Activated T-helper 1 cell treated with anti-CD3 and anti-CD28 coated beads, Interleukin-12 subunit alpha, Interleukin-12 subunit beta, Interleukin-2, Interleukin-4 antibody, amounts not matched to agents 30 ng/mL and 10 ng/mL and 1 ng/mL, durations not matched to agents 14 hours and 24 hours and 36 hours (primary cell): ENCODE measurements at regions of chr11 and their contacts with region 1.

Region 1: DNA sequence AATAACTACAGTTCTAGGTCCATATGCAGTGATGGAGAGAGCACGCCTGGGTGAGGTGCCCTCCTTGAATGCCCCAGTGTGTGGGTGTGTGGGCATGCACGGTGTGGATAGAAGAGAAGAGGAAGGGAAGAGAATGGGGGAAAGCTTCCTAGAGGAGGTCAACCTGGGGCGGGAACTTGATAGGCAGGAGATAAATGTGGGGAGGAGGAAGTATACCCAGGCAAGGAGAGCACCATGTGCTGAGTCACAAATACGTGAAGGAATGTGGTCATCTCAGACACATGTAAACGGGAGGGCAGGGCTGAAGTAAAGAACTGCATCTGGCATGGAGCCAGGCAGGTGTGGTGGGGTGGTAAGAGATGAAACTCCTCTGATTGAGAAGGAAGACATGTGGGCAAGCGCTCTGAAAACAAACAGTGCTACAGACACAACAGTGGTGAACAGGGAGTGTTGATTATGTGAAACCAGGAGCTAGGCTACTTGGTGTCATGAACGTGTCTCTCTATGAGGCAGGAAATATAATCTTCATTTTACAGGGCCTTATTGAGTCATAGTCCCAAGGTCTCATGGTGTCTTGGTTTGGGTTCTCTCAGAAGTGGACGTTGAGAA is 61.5 kb upstream of the EED start:
- DNase-seq: peak; percentile 30
- H3K4me3 Mint-ChIP-seq: no peak overlapping the region
- H3K27ac Mint-ChIP-seq: no peak overlapping the region
- H3K4me1 Mint-ChIP-seq: peaks cover 9% of the 10 kb centered on the region
- H3K27me3 Mint-ChIP-seq: no peaks in the 10 kb centered on the region

Region 2: DNA sequence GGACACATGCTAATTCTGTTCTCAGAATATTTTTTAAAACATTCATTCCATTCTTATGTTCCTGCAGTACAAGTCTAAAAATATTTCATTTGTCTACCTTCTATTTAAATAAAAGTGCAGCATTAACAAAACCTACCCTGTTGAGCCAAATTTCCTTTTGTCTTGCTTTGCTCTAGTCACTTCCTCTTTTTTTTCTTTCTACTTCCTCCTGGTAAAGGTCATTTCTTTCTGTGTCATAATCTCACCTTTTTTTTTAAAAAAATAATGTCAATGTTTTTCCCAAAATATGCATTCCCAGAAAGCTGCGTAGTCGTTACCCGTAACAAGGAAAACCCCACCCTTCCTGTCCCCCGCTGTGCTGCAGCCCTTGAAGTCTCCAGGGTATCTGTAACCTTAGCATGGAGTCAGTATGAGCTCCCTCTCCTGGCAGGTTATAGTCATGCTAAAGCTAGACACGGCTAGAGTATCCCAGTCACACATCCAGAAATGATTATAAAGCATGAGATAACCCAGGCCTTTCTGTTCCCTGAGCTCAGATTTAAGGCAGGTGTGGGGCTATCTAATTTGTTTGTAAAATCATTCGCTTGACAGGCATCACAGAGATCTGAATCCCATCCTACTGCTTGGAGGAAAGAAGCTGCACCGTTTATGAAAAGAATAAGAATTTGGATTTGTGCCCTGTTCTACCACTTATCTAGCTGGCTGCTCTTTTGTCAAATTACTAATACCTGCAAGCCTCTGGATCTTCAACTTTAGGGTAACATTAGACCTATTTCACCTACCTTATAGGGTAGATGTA is 10.4 kb after region 1 on chr11:
- intact Hi-C with region 1: loop called (anchors 1 kb)
- DNase-seq: peak; percentile 58
- H3K4me3 Mint-ChIP-seq: peak overlapping the region; percentile 58
- H3K27ac Mint-ChIP-seq: peak overlapping the region; percentile 54
- H3K4me1 Mint-ChIP-seq: peaks cover 43% of the 10 kb centered on the region
- H3K27me3 Mint-ChIP-seq: no peaks in the 10 kb centered on the region